Natural killer cell (primary cell): ENCODE measurements at regions of chr7 and their contacts with region 1.

Region 1: GRCh38 chr7:100428199-100428966 is at the start of gene ZCWPW1:
- DNase-seq: peak; percentile 96 to 99
- ATAC-seq: peak; percentile 47 to 72 (median 55)
- H3K4me3 ChIP-seq: peak within 1 kb of the TSS; percentile 99
- H3K4me3 Mint-ChIP-seq: peak within 1 kb of the TSS; percentile 96
- H3K27ac ChIP-seq: peak within 1 kb of the TSS; percentile 99
- H3K27ac Mint-ChIP-seq: peak within 1 kb of the TSS; percentile 97 to 99
- H3K4me1 ChIP-seq: peaks cover 40% of the 10 kb centered on the region
- H3K4me1 Mint-ChIP-seq: peaks cover 42 to 62% of the 10 kb centered on the region in 2 donors
- H3K27me3 ChIP-seq: no peaks in the 10 kb centered on the region
- H3K27me3 Mint-ChIP-seq: peaks cover 0 to 5% of the 10 kb centered on the region in 2 donors
- CTCF ChIP-seq: no peak
- total RNA-seq, gene ZCWPW1: 5.6 to 7.8 (median 7.2) TPM

Region 2: DNA sequence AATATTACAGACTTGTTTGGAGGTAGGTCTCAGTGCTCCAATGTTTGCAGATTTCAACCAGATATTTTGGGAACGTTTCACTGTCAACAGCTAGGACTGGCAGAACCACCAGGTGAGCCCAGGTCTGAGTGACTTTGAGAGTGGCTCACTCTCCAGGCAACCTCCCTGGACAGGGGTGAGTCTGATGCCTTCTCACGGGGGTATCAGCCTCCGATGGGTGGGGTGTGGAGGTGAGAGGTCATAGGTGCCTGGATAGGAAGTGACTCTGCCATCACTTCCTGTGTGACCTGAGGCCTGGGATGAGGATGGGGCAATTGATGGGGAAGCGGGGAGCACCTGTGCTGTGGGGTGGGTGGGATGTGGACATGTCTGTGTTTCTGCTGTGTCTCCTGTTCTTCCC is 457.1 kb before region 1 on chr7:
- intact Hi-C with region 1: no loop called
- DNase-seq: no peak
- ATAC-seq: no peak
- H3K4me3 ChIP-seq: no peak overlapping the region
- H3K4me3 Mint-ChIP-seq: no peak overlapping the region
- H3K27ac ChIP-seq: no peak overlapping the region
- H3K27ac Mint-ChIP-seq: no peak overlapping the region
- H3K4me1 ChIP-seq: no peaks in the 10 kb centered on the region
- H3K4me1 Mint-ChIP-seq: no peaks in the 10 kb centered on the region
- H3K27me3 ChIP-seq: no peaks in the 10 kb centered on the region
- H3K27me3 Mint-ChIP-seq: peaks cover 33 to 41% of the 10 kb centered on the region in 2 donors
- CTCF ChIP-seq: no peak

Region 3: DNA sequence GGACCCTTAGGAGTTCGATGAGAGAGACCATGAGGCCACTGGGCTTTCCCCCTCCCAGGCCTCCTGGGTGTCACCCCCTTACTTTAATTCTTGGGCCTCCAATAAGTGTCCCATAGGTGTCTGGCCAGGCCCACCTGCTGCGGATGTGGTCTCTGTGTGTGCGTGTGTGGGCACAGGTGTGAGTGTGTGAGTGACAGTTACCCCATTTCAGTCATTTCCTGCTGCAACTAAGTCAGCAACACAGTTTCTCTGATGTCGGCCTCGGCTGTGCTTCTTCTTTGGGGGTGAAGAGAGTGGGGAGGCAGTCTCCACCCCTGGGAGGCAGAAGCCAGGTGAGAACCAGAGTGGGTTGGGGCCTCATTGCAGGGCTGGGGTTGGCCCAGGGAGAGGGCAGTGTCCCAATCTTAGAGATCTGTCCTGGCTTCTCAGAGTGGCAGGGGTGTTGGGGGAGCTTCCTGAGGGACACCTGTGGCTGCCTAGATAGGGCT is 207.1 kb before region 1 on chr7:
- intact Hi-C with region 1: loop called (anchors 10 kb)
- DNase-seq: peak; percentile 53 to 92
- ATAC-seq: peak; percentile 50 to 66 (median 63)
- H3K4me3 ChIP-seq: peak overlapping the region; percentile 98
- H3K4me3 Mint-ChIP-seq: peak overlapping the region; percentile 95
- H3K27ac ChIP-seq: peak overlapping the region; percentile 98
- H3K27ac Mint-ChIP-seq: peak overlapping the region; percentile 98 to 99
- H3K4me1 ChIP-seq: peaks cover 81% of the 10 kb centered on the region
- H3K4me1 Mint-ChIP-seq: peaks cover 54 to 85% of the 10 kb centered on the region in 2 donors
- H3K27me3 ChIP-seq: no peaks in the 10 kb centered on the region
- H3K27me3 Mint-ChIP-seq: no peaks in the 10 kb centered on the region
- CTCF ChIP-seq: no peak

Region 4: GRCh38 chr7:100342765-100343164 is 85.6 kb before region 1 on chr7:
- intact Hi-C with region 1: loop called (anchors 2 kb)
- DNase-seq: no peak
- ATAC-seq: no peak
- H3K4me3 ChIP-seq: no peak overlapping the region
- H3K4me3 Mint-ChIP-seq: peak overlapping the region; percentile 25
- H3K27ac ChIP-seq: peak overlapping the region; percentile 8
- H3K27ac Mint-ChIP-seq: peak overlapping the region; percentile 86 to 89
- H3K4me1 ChIP-seq: peaks cover 18% of the 10 kb centered on the region
- H3K4me1 Mint-ChIP-seq: peaks cover 25 to 34% of the 10 kb centered on the region in 2 donors
- H3K27me3 ChIP-seq: no peaks in the 10 kb centered on the region
- H3K27me3 Mint-ChIP-seq: no peaks in the 10 kb centered on the region
- CTCF ChIP-seq: no peak

Region 5: GRCh38 chr7:100369105-100369504 is 59.3 kb before region 1 on chr7:
- intact Hi-C with region 1: loop called (anchors 2 kb)
- DNase-seq: peak; percentile 56 to 70
- ATAC-seq: peak; percentile 76 to 89 (median 82)
- H3K4me3 ChIP-seq: no peak overlapping the region
- H3K4me3 Mint-ChIP-seq: peak overlapping the region; percentile 81
- H3K27ac ChIP-seq: peak overlapping the region; percentile 96
- H3K27ac Mint-ChIP-seq: peak overlapping the region; percentile 96
- H3K4me1 ChIP-seq: peaks cover 91% of the 10 kb centered on the region
- H3K4me1 Mint-ChIP-seq: peaks cover 55 to 72% of the 10 kb centered on the region in 2 donors
- H3K27me3 ChIP-seq: no peaks in the 10 kb centered on the region
- H3K27me3 Mint-ChIP-seq: no peaks in the 10 kb centered on the region
- CTCF ChIP-seq: no peak

Region 6: GRCh38 chr7:100396421-100396982 is 31.9 kb before region 1 on chr7:
- intact Hi-C with region 1: loop called (anchors 1 kb)
- DNase-seq: peak in 1 of 2 donors; percentile 70
- ATAC-seq: peak; percentile 90 to 94 (median 91)
- H3K4me3 ChIP-seq: no peak overlapping the region
- H3K4me3 Mint-ChIP-seq: peak overlapping the region; percentile 93
- H3K27ac ChIP-seq: peak overlapping the region; percentile 65
- H3K27ac Mint-ChIP-seq: peak overlapping the region; percentile 94 to 98
- H3K4me1 ChIP-seq: peaks cover 22% of the 10 kb centered on the region
- H3K4me1 Mint-ChIP-seq: peaks cover 22 to 28% of the 10 kb centered on the region in 2 donors
- H3K27me3 ChIP-seq: no peaks in the 10 kb centered on the region
- H3K27me3 Mint-ChIP-seq: no peaks in the 10 kb centered on the region
- CTCF ChIP-seq: no peak

Region 7: DNA sequence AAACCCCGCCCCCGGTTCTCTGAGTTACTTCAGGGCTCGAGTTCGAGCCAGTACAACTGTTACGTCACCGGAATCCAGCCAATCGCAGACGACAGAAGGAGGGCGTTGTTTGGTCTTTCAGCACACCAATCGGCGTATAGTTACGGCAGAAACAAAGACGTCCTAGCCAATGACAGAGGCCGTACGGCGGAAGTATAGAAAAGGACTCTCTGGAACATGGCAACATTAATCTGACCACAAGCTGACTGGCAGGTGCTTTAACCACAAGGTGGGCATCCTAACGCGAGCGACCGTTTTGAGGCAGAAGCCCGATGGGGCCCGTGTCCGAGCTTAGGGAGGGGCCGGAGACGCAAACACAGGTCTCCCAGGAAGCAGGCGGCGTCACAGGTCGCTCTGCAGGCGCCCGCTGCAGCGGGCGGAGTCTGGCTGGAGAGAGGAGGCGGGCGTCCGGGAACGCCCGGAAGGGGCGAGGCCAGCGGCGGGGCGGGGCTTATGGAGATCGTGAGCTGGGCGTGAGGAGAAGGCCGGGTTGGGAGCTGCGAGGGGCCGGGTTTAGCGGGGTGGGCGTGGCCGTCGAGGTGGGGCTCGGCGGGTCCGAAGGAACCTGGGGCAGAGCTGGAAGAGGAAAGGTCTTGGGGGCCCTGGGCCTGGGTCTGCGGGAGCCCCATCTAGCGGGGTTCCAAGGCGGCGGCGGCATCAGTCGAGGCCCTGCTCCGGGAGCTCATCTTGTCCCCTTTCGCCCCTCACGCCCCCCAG is 183.8 kb after region 1 on chr7 and contains the start of gene MOSPD3:
- intact Hi-C with region 1: no loop called
- DNase-seq: peak; percentile 98 to 99
- ATAC-seq: peak; percentile 91 to 97 (median 91)
- H3K4me3 ChIP-seq: peak within 1 kb of the TSS; percentile 91
- H3K4me3 Mint-ChIP-seq: peak within 1 kb of the TSS; percentile 99
- H3K27ac ChIP-seq: peak within 1 kb of the TSS; percentile 91
- H3K27ac Mint-ChIP-seq: peak within 1 kb of the TSS; percentile 99
- H3K4me1 ChIP-seq: peaks cover 23% of the 10 kb centered on the region
- H3K4me1 Mint-ChIP-seq: peaks cover 16 to 27% of the 10 kb centered on the region in 2 donors
- H3K27me3 ChIP-seq: no peaks in the 10 kb centered on the region
- H3K27me3 Mint-ChIP-seq: no peaks in the 10 kb centered on the region
- CTCF ChIP-seq: no peak
- total RNA-seq, gene MOSPD3: 14.5 to 15.9 (median 15.5) TPM